ENCODE measurements at regions of chr4 and their contacts with region 1.

Region 1: GRCh38 chr4:41214136-41214824 is at the start of gene APBB2:
- DNase-seq: peak; percentile 97
- H3K4me3 ChIP-seq: peak within 1 kb of the TSS; percentile 89 to 96 (median 93)
- H3K27ac ChIP-seq: peak within 1 kb of the TSS; percentile 86 to 93 (median 90)
- H3K4me1 ChIP-seq: peaks cover 20 to 60% (median 45%) of the 10 kb centered on the region in 4 donors
- H3K27me3 ChIP-seq: no peaks in the 10 kb centered on the region
- CTCF ChIP-seq: peak; percentile 58 to 92 (median 91)
- EP300 ChIP-seq: no peak
- POLR2A ChIP-seq: peak; percentile 25
- total RNA-seq, gene APBB2: 51.7 to 75.9 (median 71.1) TPM

Region 2: DNA sequence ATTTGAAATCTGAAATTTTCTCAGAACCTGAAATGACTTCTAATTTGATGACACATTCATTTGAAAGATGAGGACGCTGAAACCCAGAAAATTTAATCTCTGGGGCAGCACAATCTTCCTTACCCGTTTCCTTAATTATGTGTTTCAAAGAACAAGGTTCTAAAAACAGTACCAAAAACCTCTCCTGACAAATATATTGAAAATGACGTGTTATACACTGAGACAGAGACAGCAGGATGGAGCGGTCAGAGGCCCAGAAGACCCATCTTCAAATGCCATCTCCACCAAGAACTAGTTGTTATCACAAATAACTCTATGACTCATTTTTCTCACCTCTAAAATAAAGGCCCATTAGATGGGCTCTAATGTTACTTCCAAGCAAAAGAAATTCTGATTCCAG is 287.2 kb before region 1 on chr4:
- intact Hi-C with region 1: loop called (anchors 1 kb)
- DNase-seq: no peak
- H3K4me3 ChIP-seq: no peak overlapping the region
- H3K27ac ChIP-seq: no peak overlapping the region
- H3K4me1 ChIP-seq: peaks cover 0 to 8% (median 2%) of the 10 kb centered on the region in 4 donors
- H3K27me3 ChIP-seq: no peaks in the 10 kb centered on the region
- CTCF ChIP-seq: no peak
- EP300 ChIP-seq: no peak
- POLR2A ChIP-seq: no peak

Region 3: GRCh38 chr4:40976343-40976742 is 237.9 kb before region 1 on chr4:
- intact Hi-C with region 1: loop called (anchors 2 kb)
- DNase-seq: no peak
- H3K4me3 ChIP-seq: no peak overlapping the region
- H3K27ac ChIP-seq: no peak overlapping the region
- H3K4me1 ChIP-seq: peaks cover 0 to 9% (median 6%) of the 10 kb centered on the region in 4 donors
- H3K27me3 ChIP-seq: no peaks in the 10 kb centered on the region
- CTCF ChIP-seq: peak; percentile 73 to 80 (median 74)
- EP300 ChIP-seq: no peak
- POLR2A ChIP-seq: no peak

Region 4: GRCh38 chr4:41069257-41069656 is 145.0 kb before region 1 on chr4:
- intact Hi-C with region 1: loop called (anchors 5 kb)
- DNase-seq: no peak
- H3K4me3 ChIP-seq: no peak overlapping the region
- H3K27ac ChIP-seq: peak overlapping the region; percentile 3 to 43 (median 34)
- H3K4me1 ChIP-seq: peaks cover 12 to 47% (median 40%) of the 10 kb centered on the region in 4 donors
- H3K27me3 ChIP-seq: no peaks in the 10 kb centered on the region
- CTCF ChIP-seq: no peak
- EP300 ChIP-seq: no peak
- POLR2A ChIP-seq: no peak

Region 5: GRCh38 chr4:41656572-41657520 is 442.6 kb after region 1 on chr4:
- intact Hi-C with region 1: no loop called
- DNase-seq: no peak
- H3K4me3 ChIP-seq: no peak overlapping the region
- H3K27ac ChIP-seq: peak overlapping the region in 2 of 4 donors; percentile 25 to 46
- H3K4me1 ChIP-seq: peaks cover 7 to 18% (median 10%) of the 10 kb centered on the region in 4 donors
- H3K27me3 ChIP-seq: no peaks in the 10 kb centered on the region
- CTCF ChIP-seq: no peak
- EP300 ChIP-seq: no peak
- POLR2A ChIP-seq: no peak

Measured in esophagus muscularis mucosa (tissue), 4 donors.